ENCODE measurements at regions of chr1 and their contacts with region 1.

Region 1: GRCh38 chr1:109984456-109985275 is at the start of gene AHCYL1:
- DNase-seq: peak; percentile 98
- H3K4me3 ChIP-seq: peak within 1 kb of the TSS; percentile 87 to 94 (median 91)
- H3K27ac ChIP-seq: peak within 1 kb of the TSS; percentile 95
- H3K4me1 ChIP-seq: peaks cover 31% of the 10 kb centered on the region
- H3K27me3 ChIP-seq: no peaks in the 10 kb centered on the region
- CTCF ChIP-seq: peak; percentile 97 to 98
- POLR2A ChIP-seq: peak; percentile 50
- total RNA-seq, gene AHCYL1: 64.3 and 74.2 TPM in 2 replicates

Region 2: DNA sequence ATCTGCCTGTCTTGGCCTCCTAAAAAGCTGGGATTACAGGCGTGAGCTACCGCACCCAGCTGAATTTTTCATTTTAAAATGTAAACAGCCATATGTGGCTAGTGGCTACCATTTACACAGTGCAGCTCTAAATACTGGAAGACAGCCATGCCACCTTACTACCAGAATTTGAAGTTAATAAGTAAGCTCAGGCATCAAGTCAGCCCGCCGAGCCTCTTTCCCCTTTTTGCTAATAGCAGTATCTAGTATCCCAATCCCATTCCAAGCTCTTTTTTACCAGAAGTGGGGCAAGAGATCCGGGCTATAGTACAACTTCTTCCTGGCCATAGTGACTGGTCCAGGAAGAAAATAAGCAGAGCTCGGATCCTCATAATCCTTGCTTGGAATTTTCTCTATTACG is 924.0 kb before region 1 on chr1:
- CTCF ChIA-PET with region 1: no interaction called
- POLR2A ChIA-PET with region 1: no interaction called
- dilution Hi-C with region 1: no loop called
- intact Hi-C with region 1: no loop called
- DNase-seq: no peak
- H3K4me3 ChIP-seq: no peak overlapping the region
- H3K27ac ChIP-seq: no peak overlapping the region
- H3K4me1 ChIP-seq: no peaks in the 10 kb centered on the region
- H3K27me3 ChIP-seq: no peaks in the 10 kb centered on the region
- CTCF ChIP-seq: no peak
- POLR2A ChIP-seq: no peak

Region 3: GRCh38 chr1:109697088-109697487 is 287.6 kb before region 1 on chr1:
- CTCF ChIA-PET with region 1: no interaction called
- POLR2A ChIA-PET with region 1: no interaction called
- dilution Hi-C with region 1: no loop called
- intact Hi-C with region 1: no loop called
- DNase-seq: no peak
- H3K4me3 ChIP-seq: no peak overlapping the region
- H3K27ac ChIP-seq: no peak overlapping the region
- H3K4me1 ChIP-seq: no peaks in the 10 kb centered on the region
- H3K27me3 ChIP-seq: no peaks in the 10 kb centered on the region
- CTCF ChIP-seq: no peak
- POLR2A ChIP-seq: no peak

Region 4: GRCh38 chr1:109773146-109773899 is 211.3 kb before region 1 on chr1:
- CTCF ChIA-PET with region 1: interaction called, 807 read pairs
- POLR2A ChIA-PET with region 1: interaction called, 16 read pairs
- dilution Hi-C with region 1: no loop called
- intact Hi-C with region 1: loop called (anchors 1 kb)
- DNase-seq: peak; percentile 78
- H3K4me3 ChIP-seq: no peak overlapping the region
- H3K27ac ChIP-seq: no peak overlapping the region
- H3K4me1 ChIP-seq: no peaks in the 10 kb centered on the region
- H3K27me3 ChIP-seq: peaks cover 0 to 4% of the 10 kb centered on the region in 2 experiments
- CTCF ChIP-seq: peak; percentile 88 to 92
- POLR2A ChIP-seq: no peak

Region 5: DNA sequence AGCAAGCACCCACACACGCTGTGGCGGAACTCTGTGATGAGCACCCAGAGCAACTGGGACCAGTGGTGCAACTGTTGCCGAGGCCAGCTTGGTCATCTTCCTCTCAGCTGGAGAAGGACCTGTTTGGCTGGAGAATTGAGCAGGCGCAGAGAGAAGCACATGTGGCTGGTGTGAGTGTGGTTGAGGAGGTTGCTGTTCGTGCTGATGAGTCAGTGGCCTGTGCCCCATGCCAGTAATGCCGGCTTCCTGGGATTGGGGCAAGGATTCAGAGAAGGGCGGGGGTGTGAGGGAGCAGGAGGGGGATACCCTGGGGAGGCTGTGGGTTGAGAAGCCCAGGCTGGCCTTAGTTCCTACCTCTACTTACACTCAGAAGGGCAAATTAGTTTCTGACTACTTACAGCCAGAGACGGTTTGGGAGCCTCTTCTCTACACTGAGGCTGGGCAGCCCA is 163.4 kb before region 1 on chr1:
- CTCF ChIA-PET with region 1: interaction called, 11 read pairs
- POLR2A ChIA-PET with region 1: no interaction called
- dilution Hi-C with region 1: no loop called
- intact Hi-C with region 1: no loop called
- DNase-seq: no peak
- H3K4me3 ChIP-seq: no peak overlapping the region
- H3K27ac ChIP-seq: no peak overlapping the region
- H3K4me1 ChIP-seq: peaks cover 10% of the 10 kb centered on the region
- H3K27me3 ChIP-seq: no peaks in the 10 kb centered on the region
- CTCF ChIP-seq: no peak
- POLR2A ChIP-seq: no peak

Region 6: DNA sequence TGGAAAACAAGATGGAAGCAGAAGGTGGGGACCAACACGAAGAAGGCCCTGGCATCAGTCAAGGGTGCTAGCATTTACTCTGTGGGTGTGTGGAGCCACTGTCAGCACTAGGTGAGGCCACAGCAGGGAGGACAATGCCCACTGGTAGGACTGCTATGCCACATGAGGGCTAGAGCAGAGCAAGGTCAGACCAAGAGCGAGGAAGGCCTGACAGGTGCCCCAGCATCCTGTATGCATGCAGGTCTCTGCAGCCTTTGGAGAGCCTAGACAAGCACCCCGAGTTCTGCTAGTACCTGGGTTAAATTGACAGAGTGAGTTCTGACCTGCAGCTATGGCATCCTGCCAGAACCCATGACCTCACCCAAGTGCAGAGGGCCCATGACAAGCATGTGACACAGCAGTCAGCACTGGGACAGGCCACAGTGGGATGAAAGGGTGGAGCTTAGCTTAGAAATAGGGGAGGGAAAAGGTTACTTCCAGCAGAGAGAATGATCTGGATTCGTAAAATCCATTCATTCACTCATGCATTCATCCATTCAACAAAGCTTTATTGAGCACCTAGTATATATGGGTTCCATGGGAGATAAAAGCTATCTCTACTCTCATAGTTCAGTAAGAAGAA is 83.0 kb before region 1 on chr1:
- CTCF ChIA-PET with region 1: interaction called, 20 read pairs
- POLR2A ChIA-PET with region 1: no interaction called
- dilution Hi-C with region 1: no loop called
- intact Hi-C with region 1: no loop called
- DNase-seq: no peak
- H3K4me3 ChIP-seq: no peak overlapping the region
- H3K27ac ChIP-seq: no peak overlapping the region
- H3K4me1 ChIP-seq: peaks cover 6% of the 10 kb centered on the region
- H3K27me3 ChIP-seq: peaks cover 0 to 1% of the 10 kb centered on the region in 2 experiments
- CTCF ChIP-seq: no peak
- POLR2A ChIP-seq: no peak

Region 7: GRCh38 chr1:109931189-109931731 is 53.4 kb before region 1 on chr1:
- CTCF ChIA-PET with region 1: interaction called, 90 read pairs
- POLR2A ChIA-PET with region 1: no interaction called
- dilution Hi-C with region 1: no loop called
- intact Hi-C with region 1: loop called (anchors 5 kb)
- DNase-seq: peak; percentile 90
- H3K4me3 ChIP-seq: no peak overlapping the region
- H3K27ac ChIP-seq: no peak overlapping the region
- H3K4me1 ChIP-seq: peaks cover 11% of the 10 kb centered on the region
- H3K27me3 ChIP-seq: no peaks in the 10 kb centered on the region
- CTCF ChIP-seq: no peak
- POLR2A ChIP-seq: no peak

Region 8: DNA sequence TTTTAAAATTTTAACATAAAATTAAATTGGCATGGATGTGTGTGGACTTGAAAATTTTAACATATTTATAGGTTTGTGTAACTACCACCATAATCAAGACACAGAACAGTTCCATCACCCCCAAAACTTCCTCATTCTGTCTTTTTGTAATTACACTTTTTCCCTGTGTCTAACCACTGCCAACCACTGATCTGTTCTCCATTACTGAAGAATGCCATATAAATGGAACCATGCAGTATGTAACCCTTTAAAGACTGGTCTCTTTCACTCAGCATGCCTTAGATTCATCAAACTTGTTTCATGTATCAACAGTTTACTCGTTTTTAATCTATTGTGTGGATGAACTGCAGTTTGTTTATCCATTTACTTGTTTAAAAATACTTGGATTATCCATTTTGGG is 13.1 kb before region 1 on chr1:
- CTCF ChIA-PET with region 1: interaction called, 11 read pairs
- POLR2A ChIA-PET with region 1: no interaction called
- dilution Hi-C with region 1: no loop called
- intact Hi-C with region 1: no loop called
- DNase-seq: no peak
- H3K4me3 ChIP-seq: no peak overlapping the region
- H3K27ac ChIP-seq: no peak overlapping the region
- H3K4me1 ChIP-seq: peaks cover 7% of the 10 kb centered on the region
- H3K27me3 ChIP-seq: no peaks in the 10 kb centered on the region
- CTCF ChIP-seq: no peak
- POLR2A ChIP-seq: no peak

Region 9: DNA sequence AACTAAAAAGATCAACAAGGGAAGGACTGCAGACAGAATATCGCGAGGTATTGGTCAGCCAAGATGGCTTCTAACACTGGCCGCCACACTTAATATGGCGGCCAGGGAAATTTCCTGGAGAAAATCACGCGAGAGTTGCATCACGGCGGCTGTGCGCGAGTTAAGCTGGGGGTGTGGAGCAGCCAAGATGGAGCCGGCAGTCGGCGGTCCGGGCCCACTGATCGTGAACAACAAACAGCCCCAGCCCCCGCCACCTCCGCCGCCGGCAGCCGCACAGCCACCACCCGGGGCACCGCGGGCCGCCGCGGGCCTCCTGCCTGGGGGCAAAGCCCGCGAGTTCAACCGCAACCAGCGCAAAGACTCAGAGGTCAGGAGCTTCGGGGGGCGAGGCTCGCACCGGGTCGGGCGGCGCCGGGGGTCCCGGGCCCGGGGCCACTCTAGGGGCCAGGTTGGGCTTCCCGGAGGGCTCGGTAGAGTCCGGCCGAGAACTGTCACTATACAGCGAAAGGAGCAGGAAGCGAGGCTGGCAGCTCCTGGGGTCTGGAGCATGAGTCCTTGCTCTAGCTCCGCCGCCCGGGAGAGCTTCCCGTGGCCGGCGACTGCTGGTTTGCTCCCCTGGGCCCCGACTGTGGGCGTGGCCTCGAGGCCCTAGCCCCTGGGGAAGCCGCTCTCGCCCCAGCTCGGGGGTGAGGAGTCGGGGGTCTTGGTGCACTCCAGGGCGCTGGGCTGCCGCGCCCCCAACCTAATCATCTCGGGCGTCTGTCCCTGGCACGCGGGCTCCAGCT is 50.0 kb after region 1 on chr1 and contains the start of gene STRIP1:
- CTCF ChIA-PET with region 1: interaction called, 17 read pairs
- POLR2A ChIA-PET with region 1: no interaction called
- dilution Hi-C with region 1: no loop called
- intact Hi-C with region 1: no loop called
- DNase-seq: peak; percentile 96
- H3K4me3 ChIP-seq: peak within 1 kb of the TSS; percentile 76 to 90 (median 82)
- H3K27ac ChIP-seq: peak within 1 kb of the TSS; percentile 61
- H3K4me1 ChIP-seq: peaks cover 9% of the 10 kb centered on the region
- H3K27me3 ChIP-seq: no peaks in the 10 kb centered on the region
- CTCF ChIP-seq: no peak
- POLR2A ChIP-seq: peak; percentile 74
- total RNA-seq, gene STRIP1: 38.9 and 42.1 TPM in 2 replicates

Measured in endothelial cell of umbilical vein (primary cell).